CD8-positive, alpha-beta T cell (primary cell): ENCODE measurements at regions of chr7 and their contacts with region 1.

Region 1: DNA sequence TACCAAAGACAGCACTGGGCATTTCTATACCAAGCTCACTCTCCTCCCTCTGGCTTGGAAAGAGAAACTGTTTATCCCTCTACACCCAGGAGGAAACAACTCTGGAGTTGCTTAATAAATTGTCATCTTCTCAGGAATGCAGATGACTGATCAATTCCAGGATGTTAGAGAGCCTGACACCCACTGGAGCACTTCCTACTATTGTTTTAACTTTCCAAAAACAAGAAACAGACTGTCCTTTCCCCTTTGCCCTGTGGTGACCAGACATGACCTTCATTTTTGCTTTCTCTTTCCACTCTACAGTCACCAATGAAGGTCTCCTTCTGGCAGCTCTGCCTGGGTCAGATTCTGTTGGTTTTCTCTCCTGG is 19.6 kb downstream of the GIMAP4 start:
- DNase-seq: peak in 1 of 9 experiments; percentile 28
- ATAC-seq: no peak
- H3K4me3 ChIP-seq: no peak overlapping the region
- H3K4me3 Mint-ChIP-seq: peak overlapping the region; percentile 4
- H3K27ac ChIP-seq: peak overlapping the region in 1 of 2 experiments; percentile 49
- H3K27ac Mint-ChIP-seq: peak overlapping the region; percentile 87
- H3K4me1 ChIP-seq: peaks cover 23% of the 10 kb centered on the region
- H3K4me1 Mint-ChIP-seq: peaks cover 58% of the 10 kb centered on the region
- H3K27me3 ChIP-seq: no peaks in the 10 kb centered on the region
- H3K27me3 Mint-ChIP-seq: no peaks in the 10 kb centered on the region
- CTCF ChIP-seq: no peak

Region 2: DNA sequence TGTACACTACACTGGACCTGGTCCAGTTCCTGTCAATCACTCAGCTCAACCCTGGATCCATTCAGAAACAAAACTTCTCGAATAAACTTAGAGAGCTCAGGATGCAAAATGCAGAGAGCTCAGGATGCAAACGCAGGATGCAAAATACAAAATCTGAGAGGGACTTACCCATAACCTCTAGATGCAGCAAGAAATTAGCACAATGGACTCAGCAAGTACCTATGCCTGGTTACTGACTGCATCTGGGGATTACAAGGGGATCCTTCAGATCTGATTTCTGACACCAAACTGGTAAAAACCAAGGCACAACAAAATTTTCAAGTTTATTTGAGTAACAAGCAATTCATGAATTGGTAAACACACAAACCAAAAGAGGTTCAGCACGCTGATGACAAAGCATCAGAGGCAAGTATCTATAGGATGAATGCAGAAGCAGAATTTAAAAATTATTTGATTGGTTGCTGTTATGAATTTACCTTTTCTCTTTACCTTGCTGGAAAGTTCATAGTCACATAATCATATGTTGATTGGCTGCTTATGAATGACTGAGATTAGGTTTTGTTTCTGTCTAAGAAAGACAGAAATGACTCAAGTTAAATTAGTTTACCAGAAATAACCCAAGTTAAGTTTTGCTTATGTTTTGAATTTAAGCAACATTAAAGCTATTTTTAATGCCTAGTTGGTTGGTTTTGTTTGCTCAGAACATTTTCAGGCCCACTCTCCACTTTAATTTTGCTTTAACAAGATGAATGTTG is 34.0 kb after region 1 on chr7:
- CTCF ChIA-PET with region 1: no interaction called
- POLR2A ChIA-PET with region 1: interaction called, 8 read pairs
- intact Hi-C with region 1: loop called in 1 of 2 experiments (anchors 5 kb)
- DNase-seq: no peak
- ATAC-seq: no peak
- H3K4me3 ChIP-seq: no peak overlapping the region
- H3K4me3 Mint-ChIP-seq: no peak overlapping the region
- H3K27ac ChIP-seq: peak overlapping the region in 1 of 2 experiments; percentile 21
- H3K27ac Mint-ChIP-seq: peak overlapping the region; percentile 87
- H3K4me1 ChIP-seq: peaks cover 32% of the 10 kb centered on the region
- H3K4me1 Mint-ChIP-seq: peaks cover 58% of the 10 kb centered on the region
- H3K27me3 ChIP-seq: no peaks in the 10 kb centered on the region
- H3K27me3 Mint-ChIP-seq: no peaks in the 10 kb centered on the region
- CTCF ChIP-seq: no peak